Posterior cingulate gyrus (tissue), 11 donors: ENCODE measurements at regions of chr12 and their contacts with region 1.

Region 1: GRCh38 chr12:55073043-55074022 is 52.9 kb upstream of the OR9K2 start:
- DNase-seq: peak; percentile 33 to 94 (median 81)

Region 2: GRCh38 chr12:54596526-54596946 is 476.8 kb before region 1 on chr12:
- intact Hi-C with region 1: loop called (anchors 10 kb)
- DNase-seq: peak in 9 of 10 donors; percentile 50 to 93 (median 75)

Region 3: DNA sequence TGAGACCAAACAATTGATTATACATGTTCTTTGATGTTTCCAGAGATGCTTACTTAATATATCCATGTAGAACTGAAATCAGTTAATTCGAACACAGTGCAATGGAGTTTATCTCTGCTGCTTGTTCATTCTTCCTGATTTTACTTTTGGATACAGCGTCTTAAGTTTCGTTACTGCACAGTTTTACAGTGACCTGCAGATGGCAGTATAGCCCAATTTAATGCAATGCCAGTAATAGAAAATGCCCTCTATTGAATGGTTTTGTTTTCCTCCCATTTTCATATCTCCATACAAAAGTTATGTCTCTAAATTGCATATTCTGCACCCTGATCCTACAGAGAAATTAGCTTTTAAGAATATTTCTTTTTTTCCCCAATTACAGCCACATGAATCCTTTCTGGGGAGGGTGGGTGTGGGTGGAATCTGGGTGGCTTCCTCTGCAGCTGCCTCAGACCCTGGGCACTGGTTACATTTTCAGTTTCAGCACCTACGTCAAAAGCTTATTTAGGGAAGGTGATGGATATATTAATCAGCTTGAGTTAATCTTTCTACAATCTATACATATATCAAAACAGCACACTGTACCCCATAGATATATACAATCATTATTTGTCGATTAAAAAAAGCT is 324.0 kb before region 1 on chr12:
- intact Hi-C with region 1: loop called (anchors 5 kb)
- DNase-seq: no peak

Region 4: GRCh38 chr12:54993161-54993835 is 80.0 kb before region 1 on chr12:
- intact Hi-C with region 1: loop called (anchors 1 kb)
- DNase-seq: peak in 5 of 10 donors; percentile 11 to 62 (median 46)